Natural killer cell (primary cell): ENCODE measurements at regions of chr17 and their contacts with region 1.

Region 1: DNA sequence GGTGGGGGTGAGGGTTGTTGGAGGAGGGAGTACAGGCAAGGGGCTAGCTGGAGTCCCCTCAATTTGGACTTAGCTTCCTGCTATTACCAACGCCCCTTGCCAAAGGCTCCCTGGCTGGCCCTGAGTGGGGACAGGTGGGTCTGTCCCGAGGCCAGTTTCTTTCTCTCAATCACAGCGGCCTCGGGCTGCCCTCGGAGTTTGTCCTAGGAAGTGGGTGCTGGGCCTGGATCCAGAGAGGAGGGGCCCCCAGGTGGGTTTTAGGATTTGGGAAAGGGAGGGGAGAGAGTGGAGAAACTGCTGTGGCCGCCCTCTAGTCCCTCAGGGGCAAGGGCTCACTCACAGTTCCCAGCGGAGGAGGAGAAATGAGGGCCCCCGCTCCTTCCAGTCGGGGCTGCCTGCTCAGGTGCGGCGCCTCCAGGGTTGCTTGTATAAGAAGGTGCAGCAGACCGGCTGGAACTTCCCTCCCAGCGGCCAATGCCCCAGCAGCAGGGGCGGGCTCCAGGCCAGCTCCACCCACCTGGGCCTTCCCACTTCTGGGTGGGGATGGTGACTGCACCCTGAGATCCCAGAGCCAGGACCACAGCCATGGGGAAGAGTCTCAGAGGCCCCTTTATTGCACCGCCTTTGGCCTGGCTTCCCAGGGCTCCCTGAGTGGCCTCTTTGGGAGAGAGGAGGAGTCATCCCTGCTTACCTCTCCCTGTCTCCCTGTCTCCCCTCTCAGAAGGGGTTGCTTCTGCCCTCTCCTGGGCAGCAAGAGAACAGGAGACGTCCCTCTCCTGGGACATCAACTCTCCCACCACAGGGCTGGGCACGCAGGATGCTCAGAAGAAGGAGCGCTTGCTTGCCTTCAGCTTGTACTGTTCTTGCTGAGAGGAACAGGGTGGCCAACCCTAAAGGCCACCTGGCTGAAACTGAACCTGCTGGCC is 112.0 kb upstream of the SMURF2 start:
- DNase-seq: no peak
- ATAC-seq: no peak
- H3K4me3 ChIP-seq: no peak overlapping the region
- H3K4me3 Mint-ChIP-seq: no peak overlapping the region
- H3K27ac ChIP-seq: no peak overlapping the region
- H3K27ac Mint-ChIP-seq: no peak overlapping the region
- H3K4me1 ChIP-seq: peaks cover 26% of the 10 kb centered on the region
- H3K4me1 Mint-ChIP-seq: peaks cover 10 to 19% of the 10 kb centered on the region in 2 donors
- H3K27me3 ChIP-seq: no peaks in the 10 kb centered on the region
- H3K27me3 Mint-ChIP-seq: no peaks in the 10 kb centered on the region
- CTCF ChIP-seq: no peak

Region 2: GRCh38 chr17:65022751-65023700 is 248.9 kb after region 1 on chr17:
- intact Hi-C with region 1: no loop called
- DNase-seq: peak in 1 of 2 donors; percentile 37
- ATAC-seq: peak; percentile 69 to 86 (median 82)
- H3K4me3 ChIP-seq: no peak overlapping the region
- H3K4me3 Mint-ChIP-seq: peak overlapping the region; percentile 57
- H3K27ac ChIP-seq: peak overlapping the region; percentile 35
- H3K27ac Mint-ChIP-seq: peak overlapping the region; percentile 68 to 86
- H3K4me1 ChIP-seq: peaks cover 39% of the 10 kb centered on the region
- H3K4me1 Mint-ChIP-seq: peaks cover 74 to 82% of the 10 kb centered on the region in 2 donors
- H3K27me3 ChIP-seq: no peaks in the 10 kb centered on the region
- H3K27me3 Mint-ChIP-seq: no peaks in the 10 kb centered on the region
- CTCF ChIP-seq: no peak

Region 3: DNA sequence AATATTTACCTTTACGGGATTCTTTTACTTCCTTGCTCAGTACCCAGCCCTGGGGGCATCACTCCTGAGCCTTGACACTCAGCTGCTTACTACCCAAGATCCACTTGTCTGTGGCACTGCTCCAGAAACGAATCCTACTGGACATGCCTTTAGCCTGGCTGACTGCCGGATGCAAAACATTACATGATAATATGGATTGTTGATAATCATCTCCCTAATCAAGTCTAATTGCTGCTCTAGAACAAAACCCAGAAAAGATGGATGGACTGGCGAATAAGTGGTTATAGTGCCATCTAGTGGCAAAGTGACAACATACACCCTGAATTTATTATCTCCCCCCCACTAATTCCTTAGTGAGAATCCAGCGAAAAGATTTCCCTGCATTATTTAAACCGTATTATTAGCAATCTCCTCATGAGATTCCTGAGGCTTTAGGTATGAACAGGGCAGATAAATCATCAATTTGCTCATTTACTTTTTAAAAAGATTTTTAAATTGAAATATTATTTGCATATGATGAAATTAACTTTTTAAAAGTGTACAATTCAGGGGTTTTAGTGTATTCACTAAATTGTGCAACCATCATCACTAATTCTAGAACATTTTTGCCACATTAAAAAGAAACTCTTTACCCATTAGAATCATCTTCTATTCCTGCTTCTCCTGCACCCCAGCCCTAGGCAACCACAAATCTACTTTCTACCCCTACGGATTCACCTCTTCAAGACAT is 424.7 kb after region 1 on chr17:
- intact Hi-C with region 1: loop called (anchors 5 kb)
- DNase-seq: peak in 1 of 2 donors; percentile 77
- ATAC-seq: peak; percentile 69 to 85 (median 82)
- H3K4me3 ChIP-seq: no peak overlapping the region
- H3K4me3 Mint-ChIP-seq: no peak overlapping the region
- H3K27ac ChIP-seq: no peak overlapping the region
- H3K27ac Mint-ChIP-seq: no peak overlapping the region
- H3K4me1 ChIP-seq: peaks cover 3% of the 10 kb centered on the region
- H3K4me1 Mint-ChIP-seq: peaks cover 4% of the 10 kb centered on the region in 2 donors
- H3K27me3 ChIP-seq: no peaks in the 10 kb centered on the region
- H3K27me3 Mint-ChIP-seq: no peaks in the 10 kb centered on the region
- CTCF ChIP-seq: peak; percentile 88